B cell (primary cell): ENCODE measurements at regions of chr7 and their contacts with region 1.

Region 1: DNA sequence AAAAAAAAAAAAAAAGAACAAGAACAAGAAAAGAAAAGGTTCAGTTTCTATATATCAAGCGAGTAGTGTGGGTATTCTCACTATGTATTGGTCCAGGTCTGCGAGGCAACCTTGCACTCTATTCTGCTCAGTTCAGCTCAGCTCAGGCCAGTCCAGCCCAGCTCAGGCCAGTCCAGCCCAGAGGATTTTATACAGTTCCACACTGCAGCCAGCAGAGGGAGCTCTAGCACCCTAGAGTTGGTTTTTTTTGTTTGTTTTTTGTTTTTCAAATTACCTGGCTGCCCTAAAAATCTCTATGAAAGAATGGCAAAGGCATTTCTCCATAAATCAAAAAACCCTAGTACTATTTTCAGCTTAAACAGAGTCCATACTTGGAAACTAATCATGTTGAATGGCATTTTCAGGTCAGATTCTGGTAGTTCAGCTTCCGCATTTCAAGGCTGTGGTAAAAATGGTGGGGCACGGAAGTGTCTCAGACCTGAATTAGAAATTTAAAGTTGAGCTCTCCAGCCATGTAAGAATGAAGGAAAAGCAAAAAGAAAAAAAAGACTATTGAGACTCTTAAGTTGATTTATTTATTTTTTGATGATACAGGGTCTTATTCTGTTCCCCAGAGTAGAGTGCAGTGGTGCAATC is 55.2 kb upstream of the GSDME start:
- DNase-seq: peak; percentile 70
- ATAC-seq: peak; percentile 67
- H3K4me3 ChIP-seq: no peak overlapping the region
- H3K4me3 Mint-ChIP-seq: no peak overlapping the region
- H3K27ac ChIP-seq: no peak overlapping the region
- H3K27ac Mint-ChIP-seq: no peak overlapping the region
- H3K4me1 ChIP-seq: no peaks in the 10 kb centered on the region
- H3K4me1 Mint-ChIP-seq: no peaks in the 10 kb centered on the region
- H3K27me3 ChIP-seq: no peaks in the 10 kb centered on the region
- H3K27me3 Mint-ChIP-seq: no peaks in the 10 kb centered on the region
- CTCF ChIP-seq: peak; percentile 96

Region 2: GRCh38 chr7:24572997-24573625 is 239.3 kb before region 1 on chr7 and contains the start of gene PALS2:
- CTCF ChIA-PET with region 1: interaction called, 10 read pairs
- POLR2A ChIA-PET with region 1: no interaction called
- intact Hi-C with region 1: no loop called
- DNase-seq: peak; percentile 90
- ATAC-seq: peak; percentile 79
- H3K4me3 ChIP-seq: peak within 1 kb of the TSS; percentile 63 to 88 (median 84)
- H3K4me3 Mint-ChIP-seq: peak within 1 kb of the TSS; percentile 91
- H3K27ac ChIP-seq: peak within 1 kb of the TSS; percentile 70 to 73
- H3K27ac Mint-ChIP-seq: peak within 1 kb of the TSS; percentile 89
- H3K4me1 ChIP-seq: peaks cover 24 to 29% of the 10 kb centered on the region in 2 donors
- H3K4me1 Mint-ChIP-seq: peaks cover 37% of the 10 kb centered on the region
- H3K27me3 ChIP-seq: peaks cover 0 to 3% (median 0%) of the 10 kb centered on the region in 4 experiments
- H3K27me3 Mint-ChIP-seq: peaks cover 5% of the 10 kb centered on the region
- CTCF ChIP-seq: no peak
- total RNA-seq, gene PALS2: 47.8 and 54.2 TPM in 2 replicates

Region 3: DNA sequence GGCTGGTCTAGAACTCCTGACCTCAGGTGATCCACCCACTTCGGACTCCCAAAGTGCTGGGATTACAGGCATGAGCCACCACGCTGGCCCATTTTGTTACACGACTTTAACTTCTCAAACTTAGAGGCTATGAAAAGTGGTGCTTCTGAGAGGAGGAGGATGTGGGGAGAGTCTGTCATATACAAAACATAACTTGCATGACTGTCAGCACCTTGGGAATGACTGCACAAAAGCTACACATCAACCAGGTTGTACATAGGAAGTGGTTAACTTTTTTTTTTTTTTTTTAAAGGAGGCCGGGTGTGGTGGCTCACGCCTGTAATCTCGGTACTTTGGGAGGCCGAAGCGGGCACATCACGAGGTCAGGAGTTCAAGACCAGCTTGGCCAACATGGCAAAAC is 11.8 kb before region 1 on chr7:
- CTCF ChIA-PET with region 1: interaction called, 17 read pairs
- POLR2A ChIA-PET with region 1: no interaction called
- intact Hi-C with region 1: no loop called
- DNase-seq: no peak
- ATAC-seq: no peak
- H3K4me3 ChIP-seq: no peak overlapping the region
- H3K4me3 Mint-ChIP-seq: no peak overlapping the region
- H3K27ac ChIP-seq: no peak overlapping the region
- H3K27ac Mint-ChIP-seq: no peak overlapping the region
- H3K4me1 ChIP-seq: no peaks in the 10 kb centered on the region
- H3K4me1 Mint-ChIP-seq: no peaks in the 10 kb centered on the region
- H3K27me3 ChIP-seq: no peaks in the 10 kb centered on the region
- H3K27me3 Mint-ChIP-seq: no peaks in the 10 kb centered on the region
- CTCF ChIP-seq: no peak

Region 4: GRCh38 chr7:24877790-24878311 is 65.4 kb after region 1 on chr7:
- CTCF ChIA-PET with region 1: interaction called, 17 read pairs
- POLR2A ChIA-PET with region 1: no interaction called
- intact Hi-C with region 1: no loop called
- DNase-seq: peak; percentile 59
- ATAC-seq: peak; percentile 90
- H3K4me3 ChIP-seq: no peak overlapping the region
- H3K4me3 Mint-ChIP-seq: peak overlapping the region; percentile 43
- H3K27ac ChIP-seq: peak overlapping the region in 1 of 2 donors; percentile 43
- H3K27ac Mint-ChIP-seq: peak overlapping the region; percentile 54
- H3K4me1 ChIP-seq: peaks cover 19 to 20% of the 10 kb centered on the region in 2 donors
- H3K4me1 Mint-ChIP-seq: peaks cover 29% of the 10 kb centered on the region
- H3K27me3 ChIP-seq: no peaks in the 10 kb centered on the region
- H3K27me3 Mint-ChIP-seq: no peaks in the 10 kb centered on the region
- CTCF ChIP-seq: no peak

Region 5: GRCh38 chr7:24948739-24949138 is 136.3 kb after region 1 on chr7:
- CTCF ChIA-PET with region 1: interaction called, 10 read pairs
- POLR2A ChIA-PET with region 1: no interaction called
- intact Hi-C with region 1: no loop called
- DNase-seq: no peak
- ATAC-seq: no peak
- H3K4me3 ChIP-seq: no peak overlapping the region
- H3K4me3 Mint-ChIP-seq: peak overlapping the region; percentile 2
- H3K27ac ChIP-seq: no peak overlapping the region
- H3K27ac Mint-ChIP-seq: no peak overlapping the region
- H3K4me1 ChIP-seq: peaks cover 0 to 4% of the 10 kb centered on the region in 2 donors
- H3K4me1 Mint-ChIP-seq: peaks cover 35% of the 10 kb centered on the region
- H3K27me3 ChIP-seq: no peaks in the 10 kb centered on the region
- H3K27me3 Mint-ChIP-seq: no peaks in the 10 kb centered on the region
- CTCF ChIP-seq: no peak

Region 6: GRCh38 chr7:25060487-25061055 is 248.1 kb after region 1 on chr7:
- CTCF ChIA-PET with region 1: interaction called, 38 read pairs
- POLR2A ChIA-PET with region 1: no interaction called
- intact Hi-C with region 1: no loop called
- DNase-seq: no peak
- ATAC-seq: no peak
- H3K4me3 ChIP-seq: no peak overlapping the region
- H3K4me3 Mint-ChIP-seq: no peak overlapping the region
- H3K27ac ChIP-seq: no peak overlapping the region
- H3K27ac Mint-ChIP-seq: no peak overlapping the region
- H3K4me1 ChIP-seq: no peaks in the 10 kb centered on the region
- H3K4me1 Mint-ChIP-seq: no peaks in the 10 kb centered on the region
- H3K27me3 ChIP-seq: peaks cover 0 to 3% (median 3%) of the 10 kb centered on the region in 4 experiments
- H3K27me3 Mint-ChIP-seq: peaks cover 30% of the 10 kb centered on the region
- CTCF ChIP-seq: no peak

Region 7: DNA sequence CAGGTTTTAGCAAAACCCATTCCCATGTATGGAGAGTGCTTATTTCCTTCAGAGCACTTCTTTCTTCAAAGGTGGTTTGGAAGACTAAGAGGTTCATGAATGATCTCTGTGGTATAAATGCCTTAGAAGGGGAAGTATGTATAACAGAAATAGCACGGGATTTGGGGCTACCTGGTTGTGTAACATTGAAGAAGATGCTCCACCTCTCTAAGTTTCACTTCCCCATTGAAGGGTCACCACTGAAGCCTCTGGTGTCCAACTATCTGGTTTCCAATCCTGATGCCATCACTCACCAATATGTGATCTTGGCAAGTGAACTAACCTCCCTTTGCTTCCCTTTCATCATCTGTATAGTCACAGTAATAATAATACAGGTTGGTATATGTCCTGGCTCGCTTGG is 275.4 kb after region 1 on chr7:
- CTCF ChIA-PET with region 1: interaction called, 354 read pairs
- POLR2A ChIA-PET with region 1: no interaction called
- intact Hi-C with region 1: no loop called
- DNase-seq: peak; percentile 48
- ATAC-seq: peak; percentile 65
- H3K4me3 ChIP-seq: no peak overlapping the region
- H3K4me3 Mint-ChIP-seq: no peak overlapping the region
- H3K27ac ChIP-seq: no peak overlapping the region
- H3K27ac Mint-ChIP-seq: no peak overlapping the region
- H3K4me1 ChIP-seq: peaks cover 0 to 8% of the 10 kb centered on the region in 2 donors
- H3K4me1 Mint-ChIP-seq: peaks cover 10% of the 10 kb centered on the region
- H3K27me3 ChIP-seq: peaks cover 0 to 4% (median 0%) of the 10 kb centered on the region in 4 experiments
- H3K27me3 Mint-ChIP-seq: no peaks in the 10 kb centered on the region
- CTCF ChIP-seq: no peak